Ascending aorta (tissue), 2 donors: ENCODE measurements at regions of chr16 and their contacts with region 1.

Region 1: DNA sequence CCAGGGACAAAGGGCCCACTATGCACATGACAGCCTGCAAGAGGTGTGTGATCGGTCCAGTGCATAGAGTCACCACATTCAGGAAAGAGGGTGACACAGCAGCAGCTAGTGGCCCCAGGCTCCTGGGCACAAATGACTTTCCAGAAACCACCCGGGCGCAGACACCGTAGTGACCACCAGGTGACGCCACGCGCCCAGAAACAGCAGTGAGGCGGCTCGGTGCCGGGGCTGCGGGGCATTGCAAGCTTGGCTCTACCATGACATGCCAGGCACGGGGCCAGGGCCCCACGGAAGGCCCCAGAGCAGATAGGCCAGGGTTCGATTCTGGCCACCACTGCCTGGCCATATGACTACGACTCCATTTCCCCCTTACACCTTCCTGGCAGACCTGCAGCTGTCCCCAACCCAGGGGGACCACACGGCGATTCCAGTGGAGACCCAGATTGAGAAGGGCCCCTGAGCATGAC is 6.7 kb downstream of the RHBDF1 start:
- DNase-seq: peak in 1 of 2 donors; percentile 91
- H3K4me3 ChIP-seq: no peak overlapping the region
- H3K27ac ChIP-seq: peak overlapping the region in 1 of 2 donors; percentile 41
- H3K4me1 ChIP-seq: peaks cover 13 to 48% of the 10 kb centered on the region in 2 donors
- H3K27me3 ChIP-seq: no peaks in the 10 kb centered on the region
- CTCF ChIP-seq: peak; percentile 90 to 99 (median 94)

Region 2: GRCh38 chr16:35011-35677 is 30.6 kb before region 1 on chr16:
- intact Hi-C with region 1: no loop called
- DNase-seq: peak in 1 of 2 donors; percentile 62
- H3K4me3 ChIP-seq: no peak overlapping the region
- H3K27ac ChIP-seq: no peak overlapping the region
- H3K4me1 ChIP-seq: no peaks in the 10 kb centered on the region
- H3K27me3 ChIP-seq: no peaks in the 10 kb centered on the region
- CTCF ChIP-seq: no peak

Region 3: GRCh38 chr16:96935-97381 is 31.3 kb after region 1 on chr16:
- intact Hi-C with region 1: loop called (anchors 1 kb)
- DNase-seq: peak; percentile 79 to 95
- H3K4me3 ChIP-seq: no peak overlapping the region
- H3K27ac ChIP-seq: no peak overlapping the region
- H3K4me1 ChIP-seq: peaks cover 11 to 21% of the 10 kb centered on the region in 2 donors
- H3K27me3 ChIP-seq: no peaks in the 10 kb centered on the region
- CTCF ChIP-seq: peak; percentile 95 to 100 (median 97)